ENCODE measurements at regions of chr11 and their contacts with region 1.

Region 1: DNA sequence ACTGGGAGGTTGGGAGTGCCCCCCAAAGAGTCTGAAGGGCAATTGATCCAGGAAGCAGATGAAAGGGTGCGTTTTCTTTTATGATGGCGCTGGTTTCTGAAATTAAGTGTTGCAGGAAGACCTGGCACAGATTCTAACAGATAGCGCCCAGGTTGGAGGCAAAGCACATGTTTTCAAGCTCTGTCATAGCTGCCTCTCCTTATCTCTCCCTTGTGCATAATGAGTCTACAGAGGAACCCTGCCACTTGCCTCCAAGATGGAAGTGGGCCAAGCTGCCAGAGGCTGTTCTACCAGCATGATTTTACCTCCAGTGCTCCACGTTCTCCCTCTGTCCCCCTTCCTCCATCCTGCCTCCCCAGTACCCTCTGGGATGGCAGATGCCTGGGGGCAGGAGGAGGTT is 30.0 kb upstream of the TLCD5 start:
- DNase-seq: no peak
- ATAC-seq: peak in 1 of 2 donors; percentile 44
- H3K4me3 ChIP-seq: no peak overlapping the region
- H3K27ac ChIP-seq: no peak overlapping the region
- H3K4me1 ChIP-seq: no peaks in the 10 kb centered on the region
- H3K27me3 ChIP-seq: no peaks in the 10 kb centered on the region

Region 2: GRCh38 chr11:120224972-120225909 is 69.8 kb before region 1 on chr11:
- intact Hi-C with region 1: no loop called
- DNase-seq: peak; percentile 57 to 77 (median 76)
- ATAC-seq: peak; percentile 35 to 80
- H3K4me3 ChIP-seq: no peak overlapping the region
- H3K27ac ChIP-seq: peak overlapping the region; percentile 6
- H3K4me1 ChIP-seq: peaks cover 10% of the 10 kb centered on the region
- H3K27me3 ChIP-seq: no peaks in the 10 kb centered on the region

Region 3: GRCh38 chr11:120235024-120235861 is 59.8 kb before region 1 on chr11:
- intact Hi-C with region 1: loop called (anchors 2 to 5 kb)
- DNase-seq: peak; percentile 59 to 87 (median 79)
- ATAC-seq: peak; percentile 67 to 69
- H3K4me3 ChIP-seq: no peak overlapping the region
- H3K27ac ChIP-seq: no peak overlapping the region
- H3K4me1 ChIP-seq: no peaks in the 10 kb centered on the region
- H3K27me3 ChIP-seq: no peaks in the 10 kb centered on the region